ENCODE measurements at regions of chr10 and their contacts with region 1.

Region 1: GRCh38 chr10:107814865-107815487 is 650.5 kb upstream of the SORCS1 start:
- DNase-seq: peak; percentile 54
- H3K4me3 ChIP-seq: peak overlapping the region in 1 of 2 experiments; percentile 27; a peak in 1 of 4 replicates
- H3K27ac ChIP-seq: no peak overlapping the region; a peak in 1 of 4 replicates
- H3K4me1 ChIP-seq: peaks cover 0 to 2% of the 10 kb centered on the region in 2 experiments; a peak in 1 of 4 replicates
- H3K27me3 ChIP-seq: no peaks in the 10 kb centered on the region
- CTCF ChIP-seq: peak; percentile 81
- EP300 ChIP-seq: no peak
- RAD21 ChIP-seq: peak; percentile 93

Region 2: GRCh38 chr10:107169516-107169915 is 645.5 kb before region 1 on chr10:
- CTCF ChIA-PET with region 1: interaction called, 12 read pairs
- POLR2A ChIA-PET with region 1: no interaction called
- DNase-seq: peak; percentile 30
- H3K4me3 ChIP-seq: no peak overlapping the region
- H3K27ac ChIP-seq: no peak overlapping the region
- H3K4me1 ChIP-seq: no peaks in the 10 kb centered on the region
- H3K27me3 ChIP-seq: peaks cover 10% of the 10 kb centered on the region; the same call in 1 of the 2 replicates
- CTCF ChIP-seq: no peak; the same call in 1 of the 2 replicates
- EP300 ChIP-seq: no peak
- RAD21 ChIP-seq: peak; percentile 69

Region 3: DNA sequence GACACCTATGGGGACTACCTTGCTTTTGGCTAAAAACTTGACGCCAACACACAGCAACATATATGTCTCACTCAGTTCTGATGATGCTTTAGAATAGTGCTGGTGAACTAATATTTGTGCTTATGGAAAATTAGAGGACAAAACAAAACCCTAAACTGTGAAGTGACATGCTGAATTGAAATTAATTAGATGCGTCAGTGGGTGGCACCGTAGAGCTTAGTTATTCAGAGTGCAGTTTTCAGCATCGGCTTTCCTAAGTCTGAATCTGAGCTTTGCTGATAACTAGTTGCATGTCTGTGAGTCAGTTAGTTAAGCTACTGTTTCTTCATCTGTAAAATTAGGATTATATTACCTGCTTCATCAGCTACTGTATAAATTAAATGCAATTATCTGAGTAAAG is 405.5 kb before region 1 on chr10:
- CTCF ChIA-PET with region 1: interaction called, 10 read pairs
- POLR2A ChIA-PET with region 1: no interaction called
- DNase-seq: no peak
- H3K4me3 ChIP-seq: no peak overlapping the region
- H3K27ac ChIP-seq: no peak overlapping the region
- H3K4me1 ChIP-seq: no peaks in the 10 kb centered on the region
- H3K27me3 ChIP-seq: no peaks in the 10 kb centered on the region
- CTCF ChIP-seq: peak; percentile 62
- EP300 ChIP-seq: no peak
- RAD21 ChIP-seq: peak; percentile 70

Region 4: GRCh38 chr10:107834706-107835105 is 19.7 kb after region 1 on chr10:
- CTCF ChIA-PET with region 1: no interaction called
- POLR2A ChIA-PET with region 1: no interaction called
- DNase-seq: no peak
- H3K4me3 ChIP-seq: no peak overlapping the region
- H3K27ac ChIP-seq: no peak overlapping the region
- H3K4me1 ChIP-seq: no peaks in the 10 kb centered on the region
- H3K27me3 ChIP-seq: no peaks in the 10 kb centered on the region
- CTCF ChIP-seq: no peak
- EP300 ChIP-seq: no peak
- RAD21 ChIP-seq: no peak

Measured in SK-N-SH (cell line).